Activated CD4-positive, alpha-beta T cell treated with anti-CD3 and anti-CD28 coated beads for 36 hours (primary cell): ENCODE measurements at regions of chr9 and their contacts with region 1.

Region 1: DNA sequence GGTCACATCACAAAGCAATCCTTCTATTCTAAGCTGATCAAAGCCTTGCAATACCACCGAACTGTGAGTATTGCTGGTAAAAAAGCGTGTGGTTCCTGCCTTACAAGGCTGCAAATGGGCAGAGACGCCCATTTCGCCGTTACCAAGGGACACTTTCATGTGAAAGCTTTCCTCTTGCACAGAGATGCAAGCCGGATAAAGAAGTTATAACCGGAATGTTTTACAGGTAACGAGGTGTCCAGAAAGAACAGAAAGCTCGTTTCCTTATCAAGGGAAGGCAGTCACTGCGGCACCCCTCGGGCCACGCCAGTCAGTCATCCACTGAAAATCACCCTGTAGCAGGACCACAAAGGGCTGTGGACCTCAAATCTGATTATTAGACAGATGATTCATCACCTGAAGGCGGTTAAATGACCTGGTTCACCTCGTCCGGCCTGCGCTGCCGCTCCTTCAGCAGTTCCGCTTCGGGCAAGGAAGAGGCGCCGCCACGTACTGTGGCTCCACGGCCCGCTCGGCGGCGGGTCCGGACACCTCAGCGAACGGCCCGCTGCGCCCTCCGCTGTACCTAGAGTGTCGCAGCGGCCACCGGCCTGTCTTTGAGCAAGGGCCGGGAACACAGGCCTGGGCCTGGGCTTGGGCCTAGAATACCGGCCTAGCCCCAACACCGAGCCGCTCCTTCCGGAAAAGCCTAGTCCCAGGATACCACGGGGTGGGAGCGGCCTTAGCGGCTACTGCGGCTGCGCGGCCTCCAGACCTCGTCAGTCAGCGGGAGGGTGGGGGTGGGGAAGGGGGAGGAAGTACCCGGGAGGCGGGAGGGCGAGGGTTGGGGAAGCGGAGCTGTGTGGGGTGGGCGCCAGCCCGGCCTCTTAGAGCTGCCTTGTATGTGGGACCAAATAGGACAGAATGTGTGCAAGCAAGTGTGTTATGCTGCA is at the start of gene KLHL9:
- DNase-seq: peak; percentile 94
- ATAC-seq: peak; percentile 94
- H3K4me3 Mint-ChIP-seq: peak within 1 kb of the TSS; percentile 86
- H3K27ac Mint-ChIP-seq: peak within 1 kb of the TSS; percentile 89
- H3K4me1 Mint-ChIP-seq: peaks cover 49% of the 10 kb centered on the region
- H3K27me3 Mint-ChIP-seq: peaks cover 4% of the 10 kb centered on the region
- total RNA-seq, gene KLHL9: 11.7 to 14.7 TPM

Region 2: DNA sequence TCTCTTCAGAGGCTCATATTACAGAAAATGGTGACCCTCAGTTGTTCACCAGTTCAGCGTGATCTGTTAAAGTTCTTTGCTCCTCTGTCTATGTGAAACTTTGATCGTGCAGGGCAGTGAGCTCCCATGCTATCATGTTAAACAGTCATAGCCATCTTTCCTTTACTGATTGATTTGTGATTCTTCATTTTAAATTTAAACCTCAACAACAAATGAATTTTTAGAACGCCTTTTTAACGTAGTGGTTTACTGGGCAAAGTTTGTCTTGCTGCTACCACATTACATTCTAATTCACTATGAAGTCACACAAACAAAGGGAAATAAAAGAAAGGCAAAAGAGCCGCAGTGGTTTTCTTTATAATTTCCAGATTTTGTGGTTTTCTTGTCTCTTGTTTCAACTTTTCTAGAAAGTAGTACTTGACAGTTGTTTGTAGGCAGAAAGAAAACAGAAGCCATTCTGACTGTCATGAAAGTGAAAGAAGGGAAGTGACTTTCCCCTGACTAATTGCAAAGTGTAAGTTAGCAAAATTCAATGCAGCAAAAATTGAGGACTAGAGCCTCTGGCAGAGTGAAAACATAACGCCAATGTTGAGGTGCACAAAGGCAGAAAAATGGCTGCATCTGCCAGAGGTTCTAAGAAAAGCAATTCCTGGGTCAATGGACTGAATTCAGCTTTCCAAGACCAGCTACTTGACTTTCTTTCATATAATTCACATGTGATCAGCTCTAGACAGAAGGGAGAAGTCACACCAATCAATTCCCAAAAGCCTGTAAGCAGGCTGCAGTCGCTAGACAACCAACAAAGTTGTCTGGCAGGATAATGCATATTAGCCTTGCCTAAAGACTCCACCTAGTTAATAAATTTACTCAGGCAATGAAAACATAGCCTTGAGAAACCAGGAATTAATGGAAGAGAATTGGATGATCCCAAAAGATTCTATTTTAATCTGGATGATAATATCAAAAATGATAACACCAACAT is 22.8 kb after region 1 on chr9:
- CTCF ChIA-PET with region 1: interaction called, 4 read pairs
- POLR2A ChIA-PET with region 1: no interaction called
- intact Hi-C with region 1: loop called (anchors 1 kb)
- DNase-seq: peak; percentile 40
- ATAC-seq: peak; percentile 94
- H3K4me3 Mint-ChIP-seq: peak overlapping the region; percentile 35
- H3K27ac Mint-ChIP-seq: peak overlapping the region; percentile 70
- H3K4me1 Mint-ChIP-seq: peaks cover 19% of the 10 kb centered on the region
- H3K27me3 Mint-ChIP-seq: peaks cover 18% of the 10 kb centered on the region

Region 3: GRCh38 chr9:21395778-21396717 is 61.1 kb after region 1 on chr9:
- CTCF ChIA-PET with region 1: interaction called, 34 read pairs
- POLR2A ChIA-PET with region 1: no interaction called
- intact Hi-C with region 1: loop called in 1 of 2 experiments (anchors 2 kb)
- DNase-seq: peak; percentile 78
- ATAC-seq: peak; percentile 74
- H3K4me3 Mint-ChIP-seq: peak overlapping the region; percentile 52
- H3K27ac Mint-ChIP-seq: peak overlapping the region; percentile 66
- H3K4me1 Mint-ChIP-seq: peaks cover 15% of the 10 kb centered on the region
- H3K27me3 Mint-ChIP-seq: peaks cover 47% of the 10 kb centered on the region

Region 4: GRCh38 chr9:21455320-21455719 is 120.4 kb after region 1 on chr9:
- CTCF ChIA-PET with region 1: interaction called, 18 read pairs
- POLR2A ChIA-PET with region 1: no interaction called
- intact Hi-C with region 1: no loop called
- DNase-seq: peak; percentile 37
- ATAC-seq: peak; percentile 70
- H3K4me3 Mint-ChIP-seq: no peak overlapping the region
- H3K27ac Mint-ChIP-seq: no peak overlapping the region
- H3K4me1 Mint-ChIP-seq: no peaks in the 10 kb centered on the region
- H3K27me3 Mint-ChIP-seq: peaks cover 2% of the 10 kb centered on the region

Region 5: GRCh38 chr9:21688108-21689102 is 353.4 kb after region 1 on chr9:
- CTCF ChIA-PET with region 1: no interaction called
- POLR2A ChIA-PET with region 1: no interaction called
- intact Hi-C with region 1: loop called in 1 of 2 experiments (anchors 10 kb)
- DNase-seq: no peak
- ATAC-seq: peak; percentile 30
- H3K4me3 Mint-ChIP-seq: no peak overlapping the region
- H3K27ac Mint-ChIP-seq: no peak overlapping the region
- H3K4me1 Mint-ChIP-seq: peaks cover 52% of the 10 kb centered on the region
- H3K27me3 Mint-ChIP-seq: peaks cover 3% of the 10 kb centered on the region

Region 6: GRCh38 chr9:22008736-22009562 is 674.0 kb after region 1 on chr9 and contains the start of gene CDKN2B:
- CTCF ChIA-PET with region 1: no interaction called
- POLR2A ChIA-PET with region 1: no interaction called
- intact Hi-C with region 1: loop called in 1 of 2 experiments (anchors 10 kb)
- DNase-seq: peak; percentile 82
- ATAC-seq: peak; percentile 87
- H3K4me3 Mint-ChIP-seq: peak within 1 kb of the TSS; percentile 76
- H3K27ac Mint-ChIP-seq: no peak within 1 kb of the TSS
- H3K4me1 Mint-ChIP-seq: peaks cover 20% of the 10 kb centered on the region
- H3K27me3 Mint-ChIP-seq: peaks cover 56% of the 10 kb centered on the region
- total RNA-seq, gene CDKN2B: not detected